Activated CD4-positive, alpha-beta T cell treated with anti-CD3 and anti-CD28 coated beads, Interleukin-2, amount 10 ng/mL, durations not matched to agents 24 days and 14 days (primary cell): ENCODE measurements at regions of chr7 and their contacts with region 1.

Region 1: DNA sequence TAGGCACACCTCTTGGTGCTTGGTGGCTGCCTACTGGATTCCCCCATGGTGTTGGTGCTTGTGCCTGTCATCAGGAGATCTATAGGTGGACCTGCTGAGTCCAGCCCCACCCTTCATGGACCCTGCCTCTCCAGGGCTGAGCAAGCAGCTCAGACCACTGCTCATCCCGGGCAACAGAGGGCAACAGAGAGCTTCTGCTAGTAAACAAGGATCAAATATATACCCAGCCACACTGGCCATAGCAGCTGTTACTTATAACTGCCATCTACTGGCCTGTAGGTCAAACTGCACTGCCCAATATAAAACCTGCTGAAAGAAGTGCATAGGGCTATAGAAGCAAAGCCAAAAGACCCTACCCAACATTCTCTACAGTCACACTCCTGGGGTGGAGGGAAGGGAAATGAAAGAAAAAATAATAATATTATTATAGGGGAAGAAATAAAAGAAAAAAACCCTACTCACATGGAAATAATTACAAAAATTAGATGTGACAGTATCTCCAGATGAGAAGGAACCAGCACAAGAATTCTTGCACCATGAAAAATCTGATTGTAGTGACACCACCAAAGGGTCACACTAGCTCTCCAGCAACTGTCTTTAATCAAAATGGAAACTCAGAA is 54.9 kb upstream of the ZNF800 start:
- DNase-seq: peak; percentile 89
- H3K4me3 Mint-ChIP-seq: no peak overlapping the region
- H3K27ac Mint-ChIP-seq: no peak overlapping the region
- H3K4me1 Mint-ChIP-seq: peaks cover 6% of the 10 kb centered on the region
- H3K27me3 Mint-ChIP-seq: peaks cover 47% of the 10 kb centered on the region

Region 2: GRCh38 chr7:127347567-127348246 is 99.7 kb before region 1 on chr7:
- intact Hi-C with region 1: loop called (anchors 1 kb)
- DNase-seq: peak; percentile 91
- H3K4me3 Mint-ChIP-seq: peak overlapping the region; percentile 43
- H3K27ac Mint-ChIP-seq: no peak overlapping the region
- H3K4me1 Mint-ChIP-seq: peaks cover 4% of the 10 kb centered on the region
- H3K27me3 Mint-ChIP-seq: peaks cover 15% of the 10 kb centered on the region

Region 3: DNA sequence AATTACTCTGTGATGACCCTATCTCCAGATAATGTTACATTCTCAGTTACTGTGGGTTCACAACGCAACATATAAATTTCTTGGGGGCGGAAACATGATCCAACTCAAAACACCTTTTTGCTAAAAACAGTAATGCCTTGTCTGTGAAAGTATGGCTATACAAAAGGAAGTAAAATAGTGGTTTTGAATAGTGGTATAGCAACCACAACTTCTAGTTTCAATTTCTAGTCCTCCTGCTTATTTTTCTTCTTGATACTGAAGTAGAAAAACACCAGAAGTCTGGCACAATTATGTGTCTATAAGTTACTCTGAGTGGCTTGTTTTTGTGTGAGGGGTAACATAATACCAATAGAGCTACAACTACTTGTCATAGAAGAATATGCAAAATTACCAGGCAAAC is 33.5 kb before region 1 on chr7:
- intact Hi-C with region 1: loop called (anchors 2 kb)
- DNase-seq: peak; percentile 73
- H3K4me3 Mint-ChIP-seq: peak overlapping the region; percentile 67
- H3K27ac Mint-ChIP-seq: peak overlapping the region; percentile 42
- H3K4me1 Mint-ChIP-seq: peaks cover 42% of the 10 kb centered on the region
- H3K27me3 Mint-ChIP-seq: peaks cover 18% of the 10 kb centered on the region